Lower lobe of right lung (tissue), 2 donors: ENCODE measurements at regions of chr3 and their contacts with region 1.

Region 1: DNA sequence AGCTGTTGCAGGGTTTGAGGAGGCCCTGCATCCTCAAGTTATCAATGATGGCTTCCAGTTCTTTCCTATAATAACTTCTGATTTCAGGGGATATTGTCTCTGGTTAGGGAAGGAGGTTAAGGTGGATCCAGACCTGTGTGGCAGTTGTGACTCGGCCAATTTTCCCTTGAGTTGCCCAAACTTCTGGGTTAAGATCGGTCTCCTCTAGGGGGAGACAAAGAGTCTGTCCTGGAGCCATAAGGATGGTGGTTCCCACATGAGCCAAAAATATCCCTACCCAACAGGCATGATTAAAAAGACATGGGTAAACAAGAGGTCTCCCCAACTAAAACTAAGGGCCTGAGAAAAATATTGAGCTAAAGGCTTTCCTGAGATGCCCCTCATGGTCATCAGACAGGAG is 227.5 kb upstream of the MDFIC2 start:
- DNase-seq: no peak
- ATAC-seq: no peak
- H3K4me3 ChIP-seq: no peak overlapping the region
- H3K27ac ChIP-seq: no peak overlapping the region
- H3K4me1 ChIP-seq: no peaks in the 10 kb centered on the region
- H3K27me3 ChIP-seq: no peaks in the 10 kb centered on the region
- CTCF ChIP-seq: no peak

Region 2: DNA sequence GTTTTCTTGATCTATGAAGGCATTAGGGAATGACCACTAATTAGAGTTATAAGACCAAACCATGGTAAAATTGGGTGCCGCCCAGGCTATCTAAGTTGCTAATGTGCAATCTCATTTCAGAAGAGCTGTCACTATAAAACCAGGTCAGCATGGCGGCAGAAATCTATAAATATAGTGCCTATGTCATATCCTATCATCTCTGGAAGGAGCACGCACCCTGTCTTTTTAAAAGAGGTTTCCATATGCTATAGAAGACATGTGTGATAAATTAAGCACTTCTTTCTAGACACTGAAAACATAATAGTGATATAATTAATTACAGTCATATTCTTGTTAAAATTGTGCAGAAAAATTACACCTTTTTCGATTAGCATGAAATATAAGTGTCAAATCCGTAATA is 75.4 kb before region 1 on chr3:
- intact Hi-C with region 1: no loop called
- DNase-seq: no peak
- ATAC-seq: no peak
- H3K4me3 ChIP-seq: no peak overlapping the region
- H3K27ac ChIP-seq: no peak overlapping the region
- H3K4me1 ChIP-seq: no peaks in the 10 kb centered on the region
- H3K27me3 ChIP-seq: no peaks in the 10 kb centered on the region
- CTCF ChIP-seq: no peak

Region 3: GRCh38 chr3:71652781-71653413 is 1113.0 kb after region 1 on chr3:
- intact Hi-C with region 1: loop called (anchors 10 kb)
- DNase-seq: peak; percentile 51
- ATAC-seq: peak; percentile 53 to 78
- H3K4me3 ChIP-seq: no peak overlapping the region
- H3K27ac ChIP-seq: no peak overlapping the region
- H3K4me1 ChIP-seq: no peaks in the 10 kb centered on the region
- H3K27me3 ChIP-seq: no peaks in the 10 kb centered on the region
- CTCF ChIP-seq: peak; percentile 62